ENCODE measurements at regions of chr5 and their contacts with region 1.

Region 1: GRCh38 chr5:58335518-58335917 is 124.4 kb downstream of the PLK2 start:
- ATAC-seq: peak in 2 of 8 experiments; percentile 34 to 52
- H3K4me3 ChIP-seq: no peak overlapping the region
- H3K27ac ChIP-seq: no peak overlapping the region
- H3K4me1 ChIP-seq: no peaks in the 10 kb centered on the region

Region 2: DNA sequence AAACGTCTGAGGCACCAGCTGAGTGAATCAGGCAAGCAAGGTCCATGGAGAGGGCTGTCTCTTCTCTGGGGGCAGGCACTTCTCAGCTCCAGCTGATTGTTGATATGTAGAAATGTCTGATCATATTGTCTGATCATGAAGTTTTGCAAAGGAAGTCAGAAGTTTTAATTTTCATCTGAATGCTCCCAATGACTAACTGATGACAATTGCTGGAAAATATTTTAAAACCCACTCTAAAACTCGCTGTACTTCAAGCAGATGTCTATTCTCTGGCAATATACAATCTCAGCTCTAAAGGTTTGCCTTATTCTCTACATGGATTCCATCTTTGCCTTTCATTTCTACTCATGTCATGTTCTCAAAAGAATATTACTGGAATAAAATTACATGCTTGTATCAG is 111.7 kb after region 1 on chr5:
- in situ Hi-C with region 1: loop called in 1 of 9 experiments (anchors 25 kb)
- ATAC-seq: peak in 1 of 8 experiments; percentile 1
- H3K4me3 ChIP-seq: no peak overlapping the region
- H3K27ac ChIP-seq: no peak overlapping the region
- H3K4me1 ChIP-seq: no peaks in the 10 kb centered on the region

Measured in motor neuron (in vitro differentiated cells).